ENCODE measurements at regions of chr4 and their contacts with region 1.

Region 1: GRCh38 chr4:158729716-158730559 is 6.7 kb upstream of the PPID start:
- DNase-seq: peak; percentile 36 to 71
- ATAC-seq: peak; percentile 94

Region 2: DNA sequence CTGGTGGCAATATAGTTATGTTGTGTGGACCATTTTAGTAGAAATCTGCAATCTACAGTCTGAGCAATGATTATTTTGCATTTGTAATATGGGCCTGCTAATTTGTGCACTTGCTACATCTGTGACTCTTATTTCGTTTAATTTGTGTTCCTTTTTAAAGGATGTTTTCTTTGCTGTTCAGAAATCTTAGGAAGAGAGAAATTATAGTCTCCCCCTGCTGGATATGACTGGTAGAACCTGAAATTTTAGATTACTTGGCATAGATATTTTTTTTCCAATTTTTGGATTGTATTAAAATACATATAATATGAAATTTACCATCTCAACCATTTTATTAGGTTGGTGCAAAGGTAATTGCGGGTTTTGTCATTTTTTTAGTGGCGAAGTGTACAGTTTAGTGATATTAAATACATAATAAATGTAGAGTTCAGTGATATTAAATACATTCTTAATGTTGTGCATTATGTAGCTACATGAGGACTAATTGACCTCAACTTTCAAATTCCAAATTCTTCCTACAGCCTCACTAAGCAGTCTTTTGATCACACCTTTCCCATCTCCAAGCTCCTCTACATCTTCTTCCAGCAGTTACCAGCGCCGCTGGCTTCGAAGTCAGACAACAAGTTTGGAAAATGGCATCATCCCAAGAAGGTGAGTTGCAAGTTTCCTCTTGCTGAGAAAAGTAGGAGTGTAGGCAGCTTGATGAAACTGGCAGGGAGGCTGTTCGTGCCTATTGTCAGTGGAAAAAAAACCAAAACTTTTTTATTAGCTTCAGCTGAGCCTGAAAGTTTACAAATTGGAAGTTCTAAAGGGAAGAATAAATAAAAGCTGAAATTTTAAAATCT is 121.1 kb after region 1 on chr4:
- intact Hi-C with region 1: loop called (anchors 2 to 10 kb)
- DNase-seq: no peak
- ATAC-seq: peak; percentile 42

Region 3: GRCh38 chr4:159201168-159201567 is 471.2 kb after region 1 on chr4:
- intact Hi-C with region 1: loop called in 1 of 2 experiments (anchors 5 kb)
- DNase-seq: no peak
- ATAC-seq: no peak